WTC11 (cell line): ENCODE measurements at regions of chr1 and their contacts with region 1.

Region 1: GRCh38 chr1:47432071-47433036 is 5.5 kb upstream of the FOXD2 start:
- DNase-seq: peak; percentile 90
- ATAC-seq: peak; percentile 70
- H3K4me3 Mint-ChIP-seq: peak overlapping the region; percentile 62
- H3K27ac Mint-ChIP-seq: no peak overlapping the region
- H3K4me1 Mint-ChIP-seq: peaks cover 45% of the 10 kb centered on the region
- H3K27me3 Mint-ChIP-seq: peaks cover 97% of the 10 kb centered on the region
- CTCF ChIP-seq: peak; percentile 73

Region 2: GRCh38 chr1:47388891-47389238 is 43.5 kb before region 1 on chr1:
- CTCF ChIA-PET with region 1: interaction called, 79 read pairs
- POLR2A ChIA-PET with region 1: no interaction called
- DNase-seq: peak; percentile 79
- ATAC-seq: peak; percentile 96
- H3K4me3 Mint-ChIP-seq: no peak overlapping the region
- H3K27ac Mint-ChIP-seq: no peak overlapping the region
- H3K4me1 Mint-ChIP-seq: no peaks in the 10 kb centered on the region
- H3K27me3 Mint-ChIP-seq: peaks cover 25% of the 10 kb centered on the region
- CTCF ChIP-seq: peak; percentile 77

Region 3: DNA sequence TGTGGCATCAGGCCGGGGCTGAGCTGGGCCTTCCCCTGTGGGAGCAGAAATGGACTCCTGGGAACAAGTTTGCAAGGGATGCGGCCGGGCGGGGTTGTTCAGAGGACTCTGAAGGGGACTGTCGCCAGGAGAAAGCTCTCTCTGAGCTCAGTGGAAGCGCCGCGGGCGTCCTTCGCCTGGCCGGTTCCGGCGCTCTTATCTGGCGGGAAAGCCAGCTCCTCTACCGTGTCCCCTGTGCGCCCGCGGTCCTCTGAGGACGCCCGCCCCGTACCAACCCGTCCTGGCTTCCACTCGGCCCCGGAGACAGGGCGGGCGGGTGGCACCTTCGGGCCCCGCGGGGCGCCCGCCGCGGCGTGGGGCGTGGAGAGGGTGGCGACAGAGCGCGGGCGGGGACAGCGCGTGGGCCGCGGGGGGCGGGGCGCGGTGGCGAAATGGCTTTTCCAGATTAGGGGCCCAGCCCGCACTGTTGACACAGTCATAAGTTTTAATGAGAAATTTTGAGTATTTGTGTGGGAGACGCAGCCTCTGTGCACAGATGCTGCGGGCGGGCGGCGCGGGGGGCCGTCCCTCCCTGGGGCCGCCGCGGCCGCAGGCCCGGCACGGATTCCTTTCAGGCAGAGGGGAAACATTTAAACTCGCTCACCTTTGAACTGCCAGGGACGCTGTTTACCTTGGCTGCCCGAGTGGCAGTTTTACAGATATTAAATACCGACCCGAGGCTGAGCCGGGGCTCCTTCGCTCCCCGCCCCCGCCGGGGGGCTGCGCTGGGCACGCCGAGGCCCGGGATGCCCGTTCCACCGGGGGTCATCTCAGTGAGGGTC is 75.7 kb after region 1 on chr1:
- CTCF ChIA-PET with region 1: interaction called, 20 read pairs
- POLR2A ChIA-PET with region 1: no interaction called
- DNase-seq: peak; percentile 53
- ATAC-seq: peak; percentile 60
- H3K4me3 Mint-ChIP-seq: peak overlapping the region; percentile 77
- H3K27ac Mint-ChIP-seq: no peak overlapping the region
- H3K4me1 Mint-ChIP-seq: peaks cover 13% of the 10 kb centered on the region
- H3K27me3 Mint-ChIP-seq: peaks cover 89% of the 10 kb centered on the region
- CTCF ChIP-seq: no peak

Region 4: GRCh38 chr1:47547753-47548573 is 115.6 kb after region 1 on chr1:
- CTCF ChIA-PET with region 1: interaction called, 11 read pairs
- POLR2A ChIA-PET with region 1: no interaction called
- DNase-seq: no peak
- ATAC-seq: peak; percentile 60
- H3K4me3 Mint-ChIP-seq: no peak overlapping the region
- H3K27ac Mint-ChIP-seq: no peak overlapping the region; the same call in 1 of the 2 replicates
- H3K4me1 Mint-ChIP-seq: peaks cover 28% of the 10 kb centered on the region
- H3K27me3 Mint-ChIP-seq: peaks cover 14% of the 10 kb centered on the region
- CTCF ChIP-seq: no peak